Right cardiac atrium (tissue), 5 donors: ENCODE measurements at regions of chr2 and their contacts with region 1.

Region 1: DNA sequence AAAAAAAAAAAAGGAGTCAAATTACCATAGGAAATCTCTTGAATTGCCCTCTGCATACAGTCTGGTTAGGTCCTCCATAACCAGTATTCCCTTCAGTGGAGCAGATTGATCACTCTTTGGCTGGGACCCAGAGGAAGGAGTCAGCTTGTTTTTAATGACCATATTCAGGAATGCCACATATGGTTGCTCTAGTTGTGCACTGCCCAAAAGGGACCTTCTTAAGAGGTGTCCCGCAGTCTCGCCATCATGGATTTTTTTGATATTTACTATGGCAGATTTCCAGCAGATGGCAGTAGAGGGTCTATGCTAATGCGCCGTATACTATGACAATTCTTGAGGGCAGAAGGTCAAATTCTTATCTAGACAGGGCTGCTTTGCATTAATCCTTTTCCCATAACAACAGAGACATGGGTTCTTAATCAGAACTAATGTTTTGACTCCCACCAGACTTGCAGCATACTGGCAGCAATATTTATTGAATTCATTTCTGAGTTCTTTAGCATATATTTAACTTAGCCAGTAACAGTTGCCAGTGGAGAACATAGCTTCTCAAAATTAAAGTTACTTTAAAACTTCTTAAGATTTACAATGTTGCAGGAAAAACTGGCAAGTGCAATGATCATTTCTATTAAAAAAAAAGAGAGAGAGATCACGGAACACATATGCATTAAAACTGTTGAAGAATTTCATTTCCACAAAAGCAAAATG is 31.8 kb upstream of the INPP4A start:
- DNase-seq: no peak
- ATAC-seq: peak; percentile 71 to 81
- H3K4me3 ChIP-seq: no peak overlapping the region
- H3K27ac ChIP-seq: no peak overlapping the region
- H3K4me1 ChIP-seq: no peaks in the 10 kb centered on the region
- H3K27me3 ChIP-seq: no peaks in the 10 kb centered on the region

Region 2: GRCh38 chr2:98372121-98372520 is 40.8 kb before region 1 on chr2:
- intact Hi-C with region 1: no loop called
- DNase-seq: no peak
- ATAC-seq: no peak
- H3K4me3 ChIP-seq: no peak overlapping the region
- H3K27ac ChIP-seq: no peak overlapping the region
- H3K4me1 ChIP-seq: no peaks in the 10 kb centered on the region
- H3K27me3 ChIP-seq: no peaks in the 10 kb centered on the region

Region 3: GRCh38 chr2:98518090-98518489 is 105.2 kb after region 1 on chr2:
- intact Hi-C with region 1: loop called in 1 of 4 experiments (anchors 10 kb)
- DNase-seq: no peak
- ATAC-seq: peak in 1 of 2 donors; percentile 36
- H3K4me3 ChIP-seq: no peak overlapping the region
- H3K27ac ChIP-seq: no peak overlapping the region
- H3K4me1 ChIP-seq: peaks cover 2% of the 10 kb centered on the region
- H3K27me3 ChIP-seq: no peaks in the 10 kb centered on the region

Region 4: GRCh38 chr2:98577313-98577712 is 164.4 kb after region 1 on chr2:
- intact Hi-C with region 1: loop called in 2 of 4 experiments (anchors 10 kb)
- DNase-seq: no peak
- ATAC-seq: peak in 1 of 2 donors; percentile 6
- H3K4me3 ChIP-seq: no peak overlapping the region
- H3K27ac ChIP-seq: no peak overlapping the region
- H3K4me1 ChIP-seq: no peaks in the 10 kb centered on the region
- H3K27me3 ChIP-seq: no peaks in the 10 kb centered on the region

Region 5: GRCh38 chr2:98608116-98608999 is 195.5 kb after region 1 on chr2 and contains the starts of genes COA5 and UNC50:
- intact Hi-C with region 1: loop called in 3 of 4 experiments (anchors 5 to 10 kb)
- DNase-seq: peak; percentile 93 to 97 (median 96)
- ATAC-seq: peak; percentile 97 to 98
- H3K4me3 ChIP-seq: peak within 1 kb of the TSS; percentile 67
- H3K27ac ChIP-seq: peak within 1 kb of the TSS; percentile 88
- H3K4me1 ChIP-seq: peaks cover 7% of the 10 kb centered on the region
- H3K27me3 ChIP-seq: no peaks in the 10 kb centered on the region
- total RNA-seq, gene COA5: 24.8 to 30.4 (median 28.2) TPM
- total RNA-seq, gene UNC50: 29.4 to 38.1 (median 33.1) TPM

Region 6: DNA sequence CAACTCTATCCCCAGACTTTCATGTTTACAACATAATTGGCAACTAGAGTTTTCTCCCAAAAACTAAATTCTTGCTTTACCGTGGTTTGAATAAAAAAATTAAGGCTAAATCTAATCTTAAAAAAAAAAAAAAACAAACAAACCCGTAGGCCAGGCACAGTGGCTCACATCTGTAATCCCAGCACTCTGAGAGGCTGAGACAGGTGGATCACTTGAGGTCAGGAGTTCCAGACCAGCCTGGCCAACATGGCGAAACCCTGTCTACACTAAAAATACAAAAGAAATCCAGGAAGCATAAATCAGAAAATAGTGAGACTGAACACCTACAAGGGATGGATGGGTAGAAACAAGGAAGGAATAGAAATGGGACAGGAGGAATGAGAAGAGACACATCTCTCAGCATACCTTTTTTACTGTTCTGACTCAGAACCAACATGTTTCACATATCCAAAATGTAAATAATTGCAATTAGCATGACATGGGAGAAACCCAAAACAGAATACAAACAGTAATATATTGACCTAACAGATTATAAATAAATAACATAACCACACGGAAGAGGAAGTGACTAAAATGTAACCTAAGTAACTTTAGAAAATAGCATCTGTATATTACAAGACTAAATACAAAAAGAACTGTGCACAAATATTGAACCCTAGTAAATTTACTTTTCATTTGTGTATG is 300.6 kb after region 1 on chr2:
- intact Hi-C with region 1: no loop called
- DNase-seq: no peak
- ATAC-seq: no peak
- H3K4me3 ChIP-seq: no peak overlapping the region
- H3K27ac ChIP-seq: no peak overlapping the region
- H3K4me1 ChIP-seq: peaks cover 9% of the 10 kb centered on the region
- H3K27me3 ChIP-seq: no peaks in the 10 kb centered on the region